B cell (primary cell): ENCODE measurements at regions of chr2 and their contacts with region 1.

Region 1: DNA sequence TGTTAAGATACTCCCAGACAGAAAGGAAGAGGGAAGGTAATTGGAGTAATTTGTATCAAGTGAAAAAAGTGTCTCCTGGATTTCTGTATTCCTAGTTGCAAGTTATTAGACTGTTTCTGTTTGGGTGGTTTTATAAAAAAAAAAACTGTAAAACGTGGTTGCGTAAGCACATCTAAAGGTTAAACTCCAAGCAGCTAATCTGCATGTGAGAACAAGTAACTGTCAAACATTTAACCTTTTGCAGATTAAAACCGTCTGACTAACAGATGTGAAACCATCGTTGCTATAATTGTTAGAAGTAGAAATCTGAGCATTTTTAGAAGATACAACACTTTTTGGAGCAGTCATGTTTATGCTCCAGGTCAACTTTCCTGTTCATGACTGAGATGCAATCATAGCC is 72.3 kb downstream of the AFF3 start:
- DNase-seq: no peak
- ATAC-seq: no peak
- H3K4me3 ChIP-seq: no peak overlapping the region
- H3K4me3 Mint-ChIP-seq: no peak overlapping the region
- H3K27ac ChIP-seq: peak overlapping the region in 1 of 2 donors; percentile 62
- H3K27ac Mint-ChIP-seq: peak overlapping the region; percentile 4
- H3K4me1 ChIP-seq: peaks cover 0 to 21% of the 10 kb centered on the region in 2 donors
- H3K4me1 Mint-ChIP-seq: peaks cover 80% of the 10 kb centered on the region
- H3K27me3 ChIP-seq: no peaks in the 10 kb centered on the region
- H3K27me3 Mint-ChIP-seq: no peaks in the 10 kb centered on the region
- CTCF ChIP-seq: no peak

Region 2: GRCh38 chr2:100031604-100032003 is 38.5 kb before region 1 on chr2:
- CTCF ChIA-PET with region 1: no interaction called
- POLR2A ChIA-PET with region 1: no interaction called
- intact Hi-C with region 1: loop called (anchors 5 kb)
- DNase-seq: no peak
- ATAC-seq: no peak
- H3K4me3 ChIP-seq: no peak overlapping the region
- H3K4me3 Mint-ChIP-seq: no peak overlapping the region
- H3K27ac ChIP-seq: no peak overlapping the region
- H3K27ac Mint-ChIP-seq: no peak overlapping the region
- H3K4me1 ChIP-seq: peaks cover 4 to 6% of the 10 kb centered on the region in 2 donors
- H3K4me1 Mint-ChIP-seq: peaks cover 66% of the 10 kb centered on the region
- H3K27me3 ChIP-seq: no peaks in the 10 kb centered on the region
- H3K27me3 Mint-ChIP-seq: no peaks in the 10 kb centered on the region
- CTCF ChIP-seq: no peak

Region 3: DNA sequence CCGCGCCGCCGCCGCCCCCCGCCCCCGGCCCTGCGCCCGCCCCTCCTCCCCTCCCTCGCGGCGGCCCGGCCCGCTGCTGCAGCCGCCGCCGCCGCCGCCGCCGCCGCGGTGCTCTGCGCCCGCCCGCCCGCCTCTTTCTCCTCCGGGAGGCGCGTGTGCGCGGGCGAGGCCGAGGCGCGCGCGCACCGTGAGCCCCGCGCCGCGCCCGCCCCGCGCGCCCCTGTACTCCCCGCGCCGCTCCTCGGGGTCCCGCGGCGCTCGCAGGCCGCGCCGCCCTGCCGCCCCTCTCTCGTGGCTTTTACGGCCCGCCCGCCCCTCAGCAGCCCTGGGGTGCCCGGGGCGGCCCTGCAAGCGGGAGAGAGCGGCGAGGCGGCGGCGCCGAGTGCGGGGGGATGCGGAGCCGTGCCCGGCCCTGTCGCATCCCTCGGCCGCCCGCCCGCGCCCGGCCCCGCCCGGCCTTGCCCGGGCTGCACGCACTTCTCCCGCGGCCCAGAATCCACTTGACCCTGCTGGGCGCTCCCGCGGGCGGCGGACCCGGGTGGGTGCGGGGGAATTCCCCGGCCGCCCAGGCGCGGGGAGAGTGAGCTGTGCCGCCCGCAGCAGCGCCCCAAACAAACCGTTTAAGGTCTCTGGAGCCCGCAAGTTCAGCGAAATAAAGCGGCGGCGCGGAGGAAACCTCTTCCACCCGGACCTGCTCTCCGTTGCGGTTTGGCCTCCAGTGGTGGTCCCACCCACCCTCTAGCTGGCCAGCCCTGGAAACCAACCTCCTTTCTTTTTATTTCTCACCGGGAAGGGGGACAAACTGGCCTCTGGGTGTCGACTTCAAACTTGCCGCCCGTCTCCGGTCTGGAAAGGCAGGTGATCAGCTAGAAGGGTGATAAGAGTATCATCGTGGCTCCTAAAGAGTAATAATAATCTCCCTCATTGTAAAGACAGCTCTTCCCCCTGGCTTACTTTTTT is 34.9 kb after region 1 on chr2:
- CTCF ChIA-PET with region 1: no interaction called
- POLR2A ChIA-PET with region 1: no interaction called
- intact Hi-C with region 1: no loop called
- DNase-seq: peak; percentile 69
- ATAC-seq: peak; percentile 66
- H3K4me3 ChIP-seq: peak overlapping the region in 4 of 5 experiments; percentile 41 to 74 (median 58)
- H3K4me3 Mint-ChIP-seq: peak overlapping the region; percentile 90
- H3K27ac ChIP-seq: peak overlapping the region; percentile 30 to 73
- H3K27ac Mint-ChIP-seq: peak overlapping the region; percentile 92
- H3K4me1 ChIP-seq: peaks cover 42 to 43% of the 10 kb centered on the region in 2 donors
- H3K4me1 Mint-ChIP-seq: peaks cover 41% of the 10 kb centered on the region
- H3K27me3 ChIP-seq: no peaks in the 10 kb centered on the region
- H3K27me3 Mint-ChIP-seq: no peaks in the 10 kb centered on the region
- CTCF ChIP-seq: no peak